Gastrocnemius medialis (tissue), 4 donors: ENCODE measurements at regions of chr15 and their contacts with region 1.

Region 1: DNA sequence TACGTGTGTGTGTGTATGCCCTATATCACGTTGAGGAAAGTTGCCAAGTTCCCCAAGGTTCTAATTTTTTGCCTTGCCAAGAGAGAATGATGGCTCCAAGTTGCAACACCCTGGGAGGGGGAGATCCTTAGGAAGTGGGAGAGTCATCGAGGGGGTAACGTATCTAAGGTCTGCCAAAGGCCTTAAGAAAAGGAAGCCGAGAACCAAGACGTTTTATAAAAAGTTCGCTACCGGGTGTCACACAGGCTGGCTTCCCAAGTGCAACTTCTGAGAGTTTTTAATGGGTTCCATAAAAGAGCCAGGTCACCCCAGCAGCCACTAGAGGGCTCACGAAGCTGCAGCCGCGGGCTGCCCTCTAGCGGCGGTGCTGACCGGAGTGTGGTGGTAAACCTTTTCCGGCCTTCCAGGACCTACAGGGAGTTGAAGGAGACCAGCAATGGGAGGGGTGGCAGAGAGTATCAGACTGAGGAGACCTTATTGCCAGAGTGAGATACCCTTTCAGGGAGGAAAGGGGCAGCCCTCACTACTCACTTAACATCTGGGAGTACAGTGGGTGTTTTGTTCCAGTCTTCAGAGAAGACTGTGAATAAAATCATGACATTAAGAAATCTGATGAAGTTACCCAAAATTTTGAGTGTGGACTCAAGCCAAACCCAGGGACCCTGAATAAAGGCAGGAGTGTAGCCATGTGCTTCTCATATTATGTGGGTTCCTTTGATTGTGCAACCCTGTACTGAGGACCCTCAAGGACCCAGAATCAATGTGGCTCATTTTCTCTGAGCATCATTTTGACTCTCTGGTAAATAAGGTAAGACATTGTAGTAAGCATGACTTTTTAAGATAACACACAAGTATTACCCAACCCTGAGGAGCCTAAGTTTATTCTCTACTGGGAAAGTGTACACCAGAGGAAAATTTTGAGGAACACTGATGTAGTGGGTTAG is 2.5 kb upstream of the RFX7 start:
- DNase-seq: peak; percentile 69 to 82
- ATAC-seq: peak; percentile 53 to 77
- H3K4me3 ChIP-seq: peak overlapping the region; percentile 36 to 62 (median 42)
- H3K27ac ChIP-seq: peak overlapping the region; percentile 79 to 97 (median 84)
- H3K4me1 ChIP-seq: peaks cover 30 to 33% of the 10 kb centered on the region in 2 donors
- H3K27me3 ChIP-seq: no peaks in the 10 kb centered on the region
- CTCF ChIP-seq: peak; percentile 90 to 99 (median 99)
- POLR2A ChIP-seq: no peak

Region 2: GRCh38 chr15:55196458-55197361 is 1049.4 kb before region 1 on chr15 and contains the start of gene RSL24D1:
- in situ Hi-C with region 1: no loop called
- intact Hi-C with region 1: loop called (anchors 10 kb)
- DNase-seq: peak; percentile 95 to 97
- ATAC-seq: peak; percentile 99
- H3K4me3 ChIP-seq: peak within 1 kb of the TSS; percentile 83 to 100 (median 94)
- H3K27ac ChIP-seq: peak within 1 kb of the TSS; percentile 89 to 95 (median 94)
- H3K4me1 ChIP-seq: peaks cover 23 to 30% of the 10 kb centered on the region in 2 donors
- H3K27me3 ChIP-seq: no peaks in the 10 kb centered on the region
- CTCF ChIP-seq: peak in 4 of 5 experiments; percentile 9 to 49 (median 36)
- POLR2A ChIP-seq: peak; percentile 66 to 79
- total RNA-seq, gene RSL24D1: 36.8 to 53.3 (median 52.0) TPM

Region 3: DNA sequence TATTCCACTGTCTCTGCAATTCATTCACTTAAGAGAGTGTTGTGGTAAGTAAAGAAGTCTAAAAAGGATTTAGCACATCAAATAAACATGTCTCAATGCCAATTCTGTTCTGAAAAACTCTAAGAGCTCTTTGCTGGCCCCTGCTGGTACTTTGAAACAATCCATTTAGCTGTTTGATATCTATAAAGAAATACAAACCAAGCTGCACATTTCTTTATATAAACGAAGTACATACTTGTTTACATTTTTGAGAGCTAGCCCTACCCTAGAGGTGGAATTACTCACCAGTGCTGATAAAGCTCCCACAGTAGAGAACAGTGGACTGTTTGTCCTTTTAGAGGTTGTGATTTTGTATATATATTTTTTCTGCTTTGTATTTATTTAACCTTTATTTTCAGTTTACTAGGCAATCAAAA is 328.3 kb before region 1 on chr15:
- in situ Hi-C with region 1: no loop called
- intact Hi-C with region 1: loop called (anchors 5 kb)
- DNase-seq: peak in 1 of 2 donors; percentile 37
- ATAC-seq: peak; percentile 49 to 63
- H3K4me3 ChIP-seq: peak overlapping the region; percentile 19 to 68 (median 63)
- H3K27ac ChIP-seq: peak overlapping the region; percentile 84 to 94 (median 88)
- H3K4me1 ChIP-seq: peaks cover 0 to 8% of the 10 kb centered on the region in 2 donors
- H3K27me3 ChIP-seq: no peaks in the 10 kb centered on the region
- CTCF ChIP-seq: peak in 4 of 5 experiments; percentile 45 to 78 (median 66)
- POLR2A ChIP-seq: no peak

Region 4: GRCh38 chr15:55969566-55969965 is 276.6 kb before region 1 on chr15:
- in situ Hi-C with region 1: no loop called
- intact Hi-C with region 1: no loop called
- DNase-seq: no peak
- ATAC-seq: no peak
- H3K4me3 ChIP-seq: no peak overlapping the region
- H3K27ac ChIP-seq: no peak overlapping the region
- H3K4me1 ChIP-seq: no peaks in the 10 kb centered on the region
- H3K27me3 ChIP-seq: no peaks in the 10 kb centered on the region
- CTCF ChIP-seq: no peak
- POLR2A ChIP-seq: no peak

Region 5: GRCh38 chr15:56098195-56098863 is 147.8 kb before region 1 on chr15:
- in situ Hi-C with region 1: no loop called
- intact Hi-C with region 1: loop called (anchors 2 kb)
- DNase-seq: no peak
- ATAC-seq: no peak
- H3K4me3 ChIP-seq: peak overlapping the region in 1 of 4 donors; percentile 5
- H3K27ac ChIP-seq: peak overlapping the region; percentile 80 to 92 (median 86)
- H3K4me1 ChIP-seq: peaks cover 43 to 50% of the 10 kb centered on the region in 2 donors
- H3K27me3 ChIP-seq: no peaks in the 10 kb centered on the region
- CTCF ChIP-seq: peak in 2 of 5 experiments; percentile 8 to 13
- POLR2A ChIP-seq: no peak

Region 6: GRCh38 chr15:56176996-56177395 is 69.1 kb before region 1 on chr15:
- in situ Hi-C with region 1: no loop called
- intact Hi-C with region 1: loop called (anchors 5 kb)
- DNase-seq: peak in 1 of 2 donors; percentile 27
- ATAC-seq: peak; percentile 97
- H3K4me3 ChIP-seq: peak overlapping the region in 1 of 4 donors; percentile 3
- H3K27ac ChIP-seq: peak overlapping the region; percentile 40 to 68 (median 50)
- H3K4me1 ChIP-seq: peaks cover 18 to 27% of the 10 kb centered on the region in 2 donors
- H3K27me3 ChIP-seq: no peaks in the 10 kb centered on the region
- CTCF ChIP-seq: no peak
- POLR2A ChIP-seq: no peak

Region 7: DNA sequence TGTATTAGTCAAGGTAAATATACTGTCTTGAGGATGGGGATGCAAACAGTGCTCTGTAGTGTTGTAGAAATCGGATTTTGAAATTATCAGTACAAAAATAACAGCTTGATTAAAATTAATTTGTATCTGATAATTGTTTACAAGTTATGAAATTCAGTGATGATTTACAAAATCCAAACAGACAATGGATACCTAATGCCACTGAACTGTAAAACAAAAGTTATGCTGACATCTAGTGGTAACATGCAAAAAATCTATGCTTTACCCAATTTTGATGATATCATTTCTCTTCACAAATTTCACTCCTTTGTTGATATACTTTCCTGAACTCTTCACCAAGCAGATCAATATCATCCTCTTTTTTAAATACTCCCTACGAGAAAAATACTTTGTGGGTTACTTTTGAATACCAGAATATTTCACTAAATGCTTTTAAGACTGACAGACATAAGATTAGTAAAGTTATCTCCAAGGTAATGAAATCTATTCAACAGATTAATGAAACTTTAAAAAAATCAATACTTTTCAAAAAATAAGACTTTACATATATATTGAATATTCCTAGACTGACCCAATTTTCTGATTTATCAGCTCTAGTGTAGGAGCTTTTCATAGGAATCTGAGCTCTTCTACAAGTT is 182.8 kb after region 1 on chr15:
- in situ Hi-C with region 1: no loop called
- intact Hi-C with region 1: loop called (anchors 2 kb)
- DNase-seq: no peak
- ATAC-seq: no peak
- H3K4me3 ChIP-seq: no peak overlapping the region
- H3K27ac ChIP-seq: no peak overlapping the region
- H3K4me1 ChIP-seq: no peaks in the 10 kb centered on the region
- H3K27me3 ChIP-seq: no peaks in the 10 kb centered on the region
- CTCF ChIP-seq: peak in 2 of 5 experiments; percentile 28 to 32
- POLR2A ChIP-seq: no peak